MCF 10A (cell line): ENCODE measurements at regions of chr1 and their contacts with region 1.

Region 1: DNA sequence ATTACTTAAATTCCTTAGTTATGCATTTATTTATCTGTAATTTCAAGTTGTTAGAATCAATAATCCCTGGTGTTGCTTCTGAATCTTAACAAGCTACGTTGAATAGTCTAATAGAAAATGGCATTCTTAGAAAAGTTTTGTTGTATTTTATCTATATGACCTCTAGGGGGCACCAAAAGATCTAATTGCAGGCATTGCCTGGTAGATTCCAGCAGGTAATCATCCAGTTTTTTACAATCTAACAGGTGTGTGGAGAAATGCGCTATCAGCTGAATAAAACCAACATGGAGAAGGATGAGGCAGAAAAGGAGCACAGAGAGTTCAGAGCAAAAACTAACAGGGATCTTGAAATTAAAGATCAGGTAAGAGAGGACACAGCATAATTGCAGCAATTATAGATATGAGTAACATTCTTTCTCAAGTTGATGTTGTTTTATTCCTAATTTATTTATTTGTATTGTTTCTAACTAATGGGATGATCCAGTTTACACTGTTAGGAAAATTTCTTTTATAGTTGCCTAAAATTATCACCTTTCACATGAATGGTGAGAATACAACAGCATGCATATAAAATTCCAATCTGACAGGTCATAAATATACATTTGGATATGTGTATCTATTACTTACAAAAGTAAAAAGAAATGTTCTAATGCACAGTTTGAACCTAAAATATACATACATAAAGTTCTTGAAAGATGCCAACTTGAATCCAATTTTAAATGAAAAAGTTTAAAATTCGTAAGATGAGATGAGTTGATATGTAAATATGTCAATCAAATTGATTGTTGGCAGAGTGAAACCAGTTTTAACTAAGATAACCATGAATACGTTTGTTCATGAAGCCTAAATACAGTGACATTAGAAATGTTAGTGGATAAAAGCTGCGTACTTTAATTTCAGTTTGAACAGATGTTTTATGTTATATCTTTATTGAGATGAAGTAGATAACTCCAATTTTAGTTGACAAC is 88.4 kb downstream of the SDCCAG8 start:
- DNase-seq: peak; percentile 79
- H3K4me3 Mint-ChIP-seq: no peak overlapping the region
- H3K27ac Mint-ChIP-seq: no peak overlapping the region
- H3K4me1 Mint-ChIP-seq: peaks cover 5% of the 10 kb centered on the region
- H3K27me3 Mint-ChIP-seq: no peaks in the 10 kb centered on the region
- CTCF ChIP-seq: peak; percentile 91

Region 2: GRCh38 chr1:242946206-242946605 is 398.0 kb before region 1 on chr1:
- CTCF ChIA-PET with region 1: no interaction called
- POLR2A ChIA-PET with region 1: no interaction called
- intact Hi-C with region 1: no loop called
- DNase-seq: no peak
- H3K4me3 Mint-ChIP-seq: no peak overlapping the region
- H3K27ac Mint-ChIP-seq: no peak overlapping the region
- H3K4me1 Mint-ChIP-seq: no peaks in the 10 kb centered on the region
- H3K27me3 Mint-ChIP-seq: peaks cover 35% of the 10 kb centered on the region
- CTCF ChIP-seq: no peak

Region 3: GRCh38 chr1:243267914-243268653 is 76.2 kb before region 1 on chr1:
- CTCF ChIA-PET with region 1: no interaction called
- POLR2A ChIA-PET with region 1: no interaction called
- intact Hi-C with region 1: no loop called
- DNase-seq: peak; percentile 84
- H3K4me3 Mint-ChIP-seq: peak overlapping the region; percentile 23
- H3K27ac Mint-ChIP-seq: peak overlapping the region; percentile 50
- H3K4me1 Mint-ChIP-seq: peaks cover 34% of the 10 kb centered on the region
- H3K27me3 Mint-ChIP-seq: no peaks in the 10 kb centered on the region
- CTCF ChIP-seq: no peak

Region 4: GRCh38 chr1:243325305-243325890 is 18.9 kb before region 1 on chr1:
- CTCF ChIA-PET with region 1: interaction called, 12 read pairs
- POLR2A ChIA-PET with region 1: interaction called, 5 read pairs
- intact Hi-C with region 1: no loop called
- DNase-seq: peak; percentile 82
- H3K4me3 Mint-ChIP-seq: no peak overlapping the region
- H3K27ac Mint-ChIP-seq: no peak overlapping the region
- H3K4me1 Mint-ChIP-seq: no peaks in the 10 kb centered on the region
- H3K27me3 Mint-ChIP-seq: no peaks in the 10 kb centered on the region
- CTCF ChIP-seq: peak; percentile 97

Region 5: DNA sequence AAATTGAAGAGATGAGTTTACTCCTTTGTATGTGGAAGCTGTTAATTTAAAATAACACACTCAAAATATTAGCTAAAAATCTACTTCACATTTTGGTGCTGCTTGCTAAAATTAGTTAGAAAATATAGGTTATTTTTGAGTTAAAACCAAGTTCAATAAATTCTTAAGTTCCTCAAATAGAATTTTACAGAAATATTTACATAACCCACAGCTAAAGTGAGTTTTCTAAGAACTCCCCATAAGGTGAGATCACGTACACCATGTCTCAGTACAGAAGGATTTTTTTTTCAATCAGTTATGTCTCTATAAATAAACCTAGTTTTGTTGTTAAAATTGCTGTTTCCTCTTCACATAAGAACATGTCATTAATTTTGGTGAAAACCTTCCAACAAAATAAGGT is 19.6 kb after region 1 on chr1:
- CTCF ChIA-PET with region 1: interaction called, 20 read pairs
- POLR2A ChIA-PET with region 1: interaction called, 4 read pairs
- intact Hi-C with region 1: no loop called
- DNase-seq: no peak
- H3K4me3 Mint-ChIP-seq: no peak overlapping the region
- H3K27ac Mint-ChIP-seq: no peak overlapping the region
- H3K4me1 Mint-ChIP-seq: no peaks in the 10 kb centered on the region
- H3K27me3 Mint-ChIP-seq: no peaks in the 10 kb centered on the region
- CTCF ChIP-seq: no peak

Region 6: GRCh38 chr1:243428617-243429342 is 84.5 kb after region 1 on chr1:
- CTCF ChIA-PET with region 1: no interaction called
- POLR2A ChIA-PET with region 1: no interaction called
- intact Hi-C with region 1: no loop called
- DNase-seq: no peak
- H3K4me3 Mint-ChIP-seq: no peak overlapping the region
- H3K27ac Mint-ChIP-seq: no peak overlapping the region
- H3K4me1 Mint-ChIP-seq: no peaks in the 10 kb centered on the region
- H3K27me3 Mint-ChIP-seq: no peaks in the 10 kb centered on the region
- CTCF ChIP-seq: no peak

Region 7: DNA sequence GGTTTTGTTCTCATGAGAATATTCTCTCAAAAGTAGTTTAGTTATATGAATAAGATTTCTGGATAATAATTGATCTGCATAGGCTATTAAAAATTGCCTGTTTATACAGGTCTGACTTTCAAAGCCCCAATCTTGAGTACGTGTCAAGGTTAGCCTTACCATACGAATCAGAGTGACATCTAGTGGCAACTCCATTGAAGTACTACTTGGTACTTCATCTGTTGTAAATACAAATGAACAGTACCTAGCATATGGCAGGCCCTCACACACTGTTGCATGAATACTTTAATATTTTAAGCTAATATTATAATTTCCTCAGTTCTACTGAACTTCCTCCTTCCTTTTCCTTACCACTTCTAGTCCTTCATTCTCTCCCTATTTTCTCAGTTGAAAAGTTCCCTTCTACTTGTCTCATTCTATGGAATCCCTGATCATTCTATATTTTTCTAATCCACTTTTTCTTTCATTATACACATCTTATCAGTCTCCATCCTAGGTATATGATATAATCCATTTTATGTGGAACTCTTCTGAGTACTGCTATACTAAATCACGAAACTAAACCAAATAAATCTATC is 404.5 kb after region 1 on chr1:
- CTCF ChIA-PET with region 1: interaction called, 18 read pairs
- POLR2A ChIA-PET with region 1: no interaction called
- intact Hi-C with region 1: loop called (anchors 1 kb)
- DNase-seq: peak; percentile 87
- H3K4me3 Mint-ChIP-seq: no peak overlapping the region
- H3K27ac Mint-ChIP-seq: no peak overlapping the region
- H3K4me1 Mint-ChIP-seq: no peaks in the 10 kb centered on the region
- H3K27me3 Mint-ChIP-seq: no peaks in the 10 kb centered on the region
- CTCF ChIP-seq: peak; percentile 88

Region 8: DNA sequence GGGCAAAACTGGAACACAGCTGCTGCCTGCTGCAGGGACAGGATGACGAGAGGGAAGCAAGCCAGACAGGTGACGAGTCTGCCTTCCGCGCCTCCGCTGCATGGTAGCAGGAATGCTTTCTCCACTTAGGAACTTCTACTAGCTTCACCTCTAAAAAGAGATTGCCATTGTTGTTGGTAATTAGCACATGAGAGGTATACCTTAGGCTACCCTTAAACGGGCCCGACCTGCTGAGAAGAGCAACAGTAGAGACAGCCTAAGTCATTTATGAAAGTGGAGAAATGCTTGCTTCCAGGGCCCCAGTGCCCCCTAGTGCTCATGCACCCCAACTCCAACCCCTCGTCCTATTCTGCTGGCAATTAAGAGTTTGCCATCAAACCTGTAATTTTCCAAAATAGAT is 602.7 kb after region 1 on chr1:
- CTCF ChIA-PET with region 1: interaction called, 4 read pairs
- POLR2A ChIA-PET with region 1: no interaction called
- intact Hi-C with region 1: loop called (anchors 5 kb)
- DNase-seq: peak; percentile 55
- H3K4me3 Mint-ChIP-seq: no peak overlapping the region
- H3K27ac Mint-ChIP-seq: no peak overlapping the region
- H3K4me1 Mint-ChIP-seq: no peaks in the 10 kb centered on the region
- H3K27me3 Mint-ChIP-seq: no peaks in the 10 kb centered on the region
- CTCF ChIP-seq: peak; percentile 59

Region 9: DNA sequence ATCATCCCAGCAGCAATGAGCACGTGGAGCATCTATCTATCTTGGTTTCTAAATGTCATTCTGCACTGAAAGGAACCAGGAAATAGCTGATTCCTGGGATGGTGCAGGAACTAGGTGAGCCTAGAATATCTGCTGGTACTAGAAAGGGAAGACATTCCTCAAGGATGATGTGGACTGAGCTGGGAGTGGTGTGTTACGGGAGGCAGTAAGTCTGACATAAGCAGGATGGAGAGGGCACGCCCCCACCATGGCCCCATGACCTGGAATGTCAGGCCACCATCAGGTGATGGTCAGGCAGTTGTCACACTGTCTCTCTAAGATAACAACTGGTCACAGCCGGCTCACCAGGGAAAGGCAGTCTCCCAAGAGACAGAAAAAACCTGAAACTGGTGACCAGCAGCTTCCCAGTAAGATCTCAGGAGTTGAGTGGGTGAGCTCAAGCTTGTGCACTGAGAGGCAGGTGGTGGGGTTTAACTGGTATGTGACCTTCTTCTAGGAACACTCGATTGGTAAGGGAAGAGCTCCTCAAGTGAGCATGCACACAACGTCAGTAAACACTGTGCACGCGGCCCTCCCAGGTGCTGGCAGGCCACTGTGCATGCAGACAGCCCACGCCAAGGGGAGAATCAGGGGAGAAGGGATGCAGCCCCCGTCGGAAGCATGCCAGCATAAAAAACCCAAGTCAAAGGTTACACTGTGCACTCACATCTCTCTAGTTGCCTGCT is 958.8 kb after region 1 on chr1:
- CTCF ChIA-PET with region 1: interaction called, 42 read pairs
- POLR2A ChIA-PET with region 1: interaction called, 4 read pairs
- intact Hi-C with region 1: loop called (anchors 1 kb)
- DNase-seq: peak; percentile 77
- H3K4me3 Mint-ChIP-seq: no peak overlapping the region
- H3K27ac Mint-ChIP-seq: peak overlapping the region; percentile 11
- H3K4me1 Mint-ChIP-seq: peaks cover 40% of the 10 kb centered on the region
- H3K27me3 Mint-ChIP-seq: no peaks in the 10 kb centered on the region
- CTCF ChIP-seq: no peak